ENCODE measurements at regions of chr3 and their contacts with region 1.

Region 1: DNA sequence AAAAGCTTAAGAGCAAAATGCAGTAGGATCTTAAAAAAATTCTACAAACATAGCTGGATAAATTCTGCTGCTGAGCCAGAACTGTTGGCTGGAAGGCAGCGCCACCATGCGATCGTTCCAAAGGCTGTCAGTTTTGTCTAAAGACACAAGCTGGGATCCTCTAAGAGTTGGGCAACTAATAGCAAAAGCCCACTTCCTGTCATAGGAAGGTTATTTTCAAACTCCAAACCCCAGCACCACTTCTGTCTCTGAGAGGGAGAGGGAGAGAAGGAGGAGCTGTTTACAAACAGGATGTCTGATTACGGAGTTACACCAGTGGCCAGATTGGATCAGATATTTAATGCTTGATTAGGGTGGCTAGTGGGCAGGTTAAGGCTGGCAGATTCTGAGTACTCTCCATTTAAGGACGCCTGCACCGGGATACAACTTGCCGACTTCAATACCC is 44.0 kb downstream of the EIF4E3 start:
- DNase-seq: peak; percentile 59
- H3K4me3 Mint-ChIP-seq: no peak overlapping the region
- H3K27ac Mint-ChIP-seq: no peak overlapping the region
- H3K4me1 Mint-ChIP-seq: peaks cover 8% of the 10 kb centered on the region
- H3K27me3 Mint-ChIP-seq: no peaks in the 10 kb centered on the region

Region 2: DNA sequence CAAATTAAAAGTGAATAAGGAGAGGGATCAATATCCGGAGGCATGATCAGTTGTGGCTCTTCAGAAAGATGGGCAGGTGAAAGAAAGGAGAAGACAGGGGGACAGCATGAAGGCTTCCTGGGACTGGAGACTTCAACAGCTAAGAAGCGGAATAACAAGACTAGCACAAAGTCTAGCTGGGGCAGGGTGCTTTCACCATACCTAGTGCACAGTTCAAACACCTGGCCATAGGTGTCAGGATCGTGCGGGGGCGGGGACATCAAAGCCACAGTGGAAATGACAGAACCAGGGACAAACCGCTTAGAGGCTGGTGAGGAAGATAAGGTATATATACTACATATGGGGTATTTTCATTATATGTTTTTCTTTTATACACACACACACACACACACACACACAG is 31.5 kb before region 1 on chr3:
- CTCF ChIA-PET with region 1: no interaction called
- POLR2A ChIA-PET with region 1: no interaction called
- intact Hi-C with region 1: no loop called
- DNase-seq: no peak
- H3K4me3 Mint-ChIP-seq: no peak overlapping the region
- H3K27ac Mint-ChIP-seq: no peak overlapping the region
- H3K4me1 Mint-ChIP-seq: peaks cover 8% of the 10 kb centered on the region
- H3K27me3 Mint-ChIP-seq: no peaks in the 10 kb centered on the region

Region 3: DNA sequence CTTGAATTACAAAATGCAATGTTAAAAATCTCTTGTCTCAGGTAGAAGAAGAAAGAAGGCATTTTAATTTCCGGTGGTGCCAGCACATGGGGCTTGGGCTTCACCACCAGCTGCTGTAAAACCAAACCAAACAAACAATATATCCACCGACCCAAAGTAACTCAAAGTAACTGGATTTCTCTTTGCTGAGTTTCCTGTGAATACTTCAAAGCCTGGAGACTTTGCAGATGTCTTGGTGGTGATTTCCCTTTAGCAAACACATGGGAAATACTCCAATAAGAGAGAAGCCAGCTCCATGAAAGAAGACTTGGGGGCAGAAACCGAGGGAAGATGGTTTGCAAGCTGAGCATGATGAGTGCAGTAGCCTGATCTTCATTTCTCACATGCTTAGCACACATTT is 18.7 kb before region 1 on chr3:
- CTCF ChIA-PET with region 1: interaction called, 5 read pairs
- POLR2A ChIA-PET with region 1: no interaction called
- intact Hi-C with region 1: loop called (anchors 1 kb)
- DNase-seq: no peak
- H3K4me3 Mint-ChIP-seq: no peak overlapping the region
- H3K27ac Mint-ChIP-seq: no peak overlapping the region
- H3K4me1 Mint-ChIP-seq: peaks cover 9% of the 10 kb centered on the region
- H3K27me3 Mint-ChIP-seq: no peaks in the 10 kb centered on the region

Measured in activated CD4-positive, alpha-beta memory T cell treated with anti-CD3 and anti-CD28 coated beads for 36 hours (primary cell).